K562 (cell line): ENCODE measurements at regions of chr6 and their contacts with region 1.

Region 1: GRCh38 chr6:125779924-125780539 is 10.7 kb upstream of the NCOA7 start:
- DNase-seq: peak; percentile 87 to 94 (median 89)
- ATAC-seq: peak; percentile 79
- H3K4me3 ChIP-seq: peak overlapping the region; percentile 47
- H3K27ac ChIP-seq: peak overlapping the region; percentile 98
- H3K4me1 ChIP-seq: no peaks in the 10 kb centered on the region; a peak in 2 of 5 replicates
- H3K27me3 ChIP-seq: no peaks in the 10 kb centered on the region
- CTCF ChIP-seq: peak in 2 of 3 experiments; percentile 27 to 34; a peak in 2 of 6 replicates
- EP300 ChIP-seq: peak; percentile 79
- POLR2A ChIP-seq: no peak
- RAD21 ChIP-seq: 0 out of 4 replicates have a peak, but pooled peaks of 1 of the 2 experiments have one; percentile 9

Region 2: DNA sequence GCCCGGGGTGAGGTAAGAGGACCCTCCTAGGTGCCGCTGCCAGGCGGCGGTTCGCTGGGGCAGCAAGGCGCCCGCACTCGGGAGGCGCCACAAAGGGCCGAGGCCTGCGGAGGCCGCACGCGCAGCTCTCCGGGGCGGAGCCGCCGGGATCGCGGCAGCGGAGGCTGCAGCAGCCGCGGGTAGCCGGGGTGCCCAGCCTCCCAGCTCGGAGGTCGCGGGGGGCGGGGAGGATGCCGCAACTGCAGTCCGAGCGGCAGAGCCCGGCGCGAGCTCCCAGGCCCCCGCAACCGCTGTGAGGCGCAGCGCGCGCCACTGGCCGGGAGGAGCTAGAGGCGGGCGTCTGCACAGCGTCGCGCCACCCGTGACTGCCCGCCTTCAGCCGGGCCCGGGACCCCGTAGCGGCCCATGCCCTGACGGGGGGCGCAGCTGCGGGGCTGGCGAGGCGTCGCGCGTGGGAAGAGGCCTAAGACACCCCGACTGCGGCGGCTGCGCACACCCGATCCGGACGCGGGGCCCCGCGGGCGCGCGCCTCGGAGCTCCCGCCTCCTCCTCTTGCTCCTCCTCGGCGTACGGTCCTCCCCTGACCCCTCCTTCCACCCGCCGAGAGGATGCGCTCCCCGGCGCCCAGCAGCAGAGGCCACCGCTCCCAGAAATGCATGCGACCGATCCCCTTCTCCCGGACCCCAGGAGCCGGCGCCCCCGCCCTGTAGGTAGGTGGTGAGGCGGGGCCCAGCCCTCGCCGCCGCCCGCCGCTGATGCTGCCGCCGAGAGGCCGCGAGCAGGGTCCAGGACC is 10.5 kb after region 1 on chr6 and contains the start of gene NCOA7:
- CTCF ChIA-PET with region 1: no interaction called
- POLR2A ChIA-PET with region 1: interaction called, 98 read pairs
- in situ Hi-C with region 1: no loop called
- intact Hi-C with region 1: loop called (anchors 1 kb)
- DNase-seq: peak; percentile 78 to 88 (median 84)
- ATAC-seq: peak; percentile 84
- H3K4me3 ChIP-seq: peak within 1 kb of the TSS; percentile 82
- H3K27ac ChIP-seq: peak within 1 kb of the TSS; percentile 96
- H3K4me1 ChIP-seq: peaks cover 17 to 18% of the 10 kb centered on the region in 2 experiments
- H3K27me3 ChIP-seq: no peaks in the 10 kb centered on the region
- CTCF ChIP-seq: peak in 1 of 3 experiments; percentile 10; a peak in 1 of 6 replicates
- EP300 ChIP-seq: no peak
- POLR2A ChIP-seq: peak; percentile 63
- RAD21 ChIP-seq: 0 out of 4 replicates have a peak, but pooled peaks of 1 of the 2 experiments have one; percentile 9
- polyA plus RNA-seq, gene NCOA7: 5.8 to 7.0 TPM

Region 3: GRCh38 chr6:125974214-125974866 is 194.3 kb after region 1 on chr6:
- CTCF ChIA-PET with region 1: interaction called, 7 read pairs
- POLR2A ChIA-PET with region 1: interaction called, 10 read pairs
- in situ Hi-C with region 1: loop called (anchors 5 kb)
- intact Hi-C with region 1: loop called (anchors 1 kb)
- DNase-seq: peak in 3 of 4 experiments; percentile 39 to 64 (median 41)
- ATAC-seq: peak; percentile 90
- H3K4me3 ChIP-seq: no peak overlapping the region
- H3K27ac ChIP-seq: no peak overlapping the region
- H3K4me1 ChIP-seq: no peaks in the 10 kb centered on the region
- H3K27me3 ChIP-seq: no peaks in the 10 kb centered on the region
- CTCF ChIP-seq: peak; percentile 45 to 80 (median 50); a peak in 5 of 6 replicates
- EP300 ChIP-seq: peak; percentile 23; the same call in 1 of the 2 replicates
- POLR2A ChIP-seq: no peak
- RAD21 ChIP-seq: peak; percentile 81 to 84

Region 4: DNA sequence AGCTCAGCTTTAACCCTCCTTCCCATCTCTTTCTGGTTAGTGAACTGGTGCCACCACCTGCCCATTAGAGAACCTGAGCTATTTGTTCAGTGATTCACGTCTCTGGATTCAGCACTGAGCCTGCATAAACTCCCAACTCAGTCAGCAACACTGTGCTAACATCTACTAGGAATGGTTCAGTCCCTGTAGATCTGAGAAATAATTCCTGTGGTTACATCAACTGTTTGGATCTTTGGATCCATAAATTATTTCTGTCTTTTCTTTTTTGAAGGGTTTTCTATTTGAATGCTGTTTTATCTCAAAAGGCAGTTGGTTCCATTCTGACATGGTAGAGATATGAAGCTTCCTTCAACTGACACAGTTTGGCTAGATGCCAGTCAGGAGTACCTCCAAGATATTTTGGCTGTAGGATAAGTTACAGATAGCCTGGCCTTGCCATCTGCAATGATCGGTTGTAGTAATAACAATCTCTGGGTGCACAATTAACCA is 332.2 kb after region 1 on chr6:
- CTCF ChIA-PET with region 1: no interaction called
- POLR2A ChIA-PET with region 1: no interaction called
- in situ Hi-C with region 1: no loop called
- intact Hi-C with region 1: loop called (anchors 10 kb)
- DNase-seq: peak in 2 of 4 experiments; percentile 57 to 92
- ATAC-seq: peak; percentile 80
- H3K4me3 ChIP-seq: no peak overlapping the region
- H3K27ac ChIP-seq: peak overlapping the region; percentile 73
- H3K4me1 ChIP-seq: peaks cover 0 to 48% of the 10 kb centered on the region in 2 experiments; a peak in 4 of 5 replicates
- H3K27me3 ChIP-seq: no peaks in the 10 kb centered on the region
- CTCF ChIP-seq: peak in 2 of 3 experiments; percentile 2 to 29; a peak in 2 of 6 replicates
- EP300 ChIP-seq: peak; percentile 99
- POLR2A ChIP-seq: no peak
- RAD21 ChIP-seq: peak; percentile 25 to 44; a peak in 3 of 4 replicates

Region 5: DNA sequence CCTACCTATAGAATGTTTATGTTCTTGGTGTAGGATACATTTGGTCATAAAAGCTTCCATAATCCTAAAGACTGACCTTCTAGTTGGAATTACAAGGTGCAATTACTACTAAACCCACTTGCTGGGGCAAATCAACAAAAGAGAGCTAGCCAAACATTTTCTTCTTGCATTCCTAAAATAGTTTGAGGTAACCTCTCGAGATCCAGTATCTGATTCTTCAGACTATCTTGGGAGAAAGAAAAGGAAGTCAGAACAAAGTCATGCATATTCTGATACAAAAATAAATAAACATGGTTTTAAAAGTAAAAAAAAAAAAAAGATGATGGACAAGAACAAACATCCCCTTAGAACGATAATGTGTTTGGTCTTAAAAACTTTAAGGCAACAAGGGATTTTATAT is 1044.2 kb after region 1 on chr6:
- CTCF ChIA-PET with region 1: no interaction called
- POLR2A ChIA-PET with region 1: no interaction called
- in situ Hi-C with region 1: no loop called
- intact Hi-C with region 1: no loop called
- DNase-seq: no peak
- ATAC-seq: no peak
- H3K4me3 ChIP-seq: no peak overlapping the region
- H3K27ac ChIP-seq: no peak overlapping the region
- H3K4me1 ChIP-seq: no peaks in the 10 kb centered on the region
- H3K27me3 ChIP-seq: no peaks in the 10 kb centered on the region
- CTCF ChIP-seq: no peak
- EP300 ChIP-seq: no peak
- POLR2A ChIP-seq: no peak
- RAD21 ChIP-seq: no peak

Region 6: GRCh38 chr6:127279815-127280214 is 1499.8 kb after region 1 on chr6:
- CTCF ChIA-PET with region 1: no interaction called
- POLR2A ChIA-PET with region 1: no interaction called
- in situ Hi-C with region 1: loop called (anchors 10 kb)
- intact Hi-C with region 1: no loop called
- DNase-seq: no peak
- ATAC-seq: no peak
- H3K4me3 ChIP-seq: no peak overlapping the region
- H3K27ac ChIP-seq: no peak overlapping the region
- H3K4me1 ChIP-seq: peaks cover 4 to 10% of the 10 kb centered on the region in 2 experiments; a peak in 3 of 5 replicates
- H3K27me3 ChIP-seq: no peaks in the 10 kb centered on the region
- CTCF ChIP-seq: no peak
- EP300 ChIP-seq: no peak
- POLR2A ChIP-seq: no peak
- RAD21 ChIP-seq: no peak